ENCODE measurements at regions of chr4 and their contacts with region 1.

Region 1: DNA sequence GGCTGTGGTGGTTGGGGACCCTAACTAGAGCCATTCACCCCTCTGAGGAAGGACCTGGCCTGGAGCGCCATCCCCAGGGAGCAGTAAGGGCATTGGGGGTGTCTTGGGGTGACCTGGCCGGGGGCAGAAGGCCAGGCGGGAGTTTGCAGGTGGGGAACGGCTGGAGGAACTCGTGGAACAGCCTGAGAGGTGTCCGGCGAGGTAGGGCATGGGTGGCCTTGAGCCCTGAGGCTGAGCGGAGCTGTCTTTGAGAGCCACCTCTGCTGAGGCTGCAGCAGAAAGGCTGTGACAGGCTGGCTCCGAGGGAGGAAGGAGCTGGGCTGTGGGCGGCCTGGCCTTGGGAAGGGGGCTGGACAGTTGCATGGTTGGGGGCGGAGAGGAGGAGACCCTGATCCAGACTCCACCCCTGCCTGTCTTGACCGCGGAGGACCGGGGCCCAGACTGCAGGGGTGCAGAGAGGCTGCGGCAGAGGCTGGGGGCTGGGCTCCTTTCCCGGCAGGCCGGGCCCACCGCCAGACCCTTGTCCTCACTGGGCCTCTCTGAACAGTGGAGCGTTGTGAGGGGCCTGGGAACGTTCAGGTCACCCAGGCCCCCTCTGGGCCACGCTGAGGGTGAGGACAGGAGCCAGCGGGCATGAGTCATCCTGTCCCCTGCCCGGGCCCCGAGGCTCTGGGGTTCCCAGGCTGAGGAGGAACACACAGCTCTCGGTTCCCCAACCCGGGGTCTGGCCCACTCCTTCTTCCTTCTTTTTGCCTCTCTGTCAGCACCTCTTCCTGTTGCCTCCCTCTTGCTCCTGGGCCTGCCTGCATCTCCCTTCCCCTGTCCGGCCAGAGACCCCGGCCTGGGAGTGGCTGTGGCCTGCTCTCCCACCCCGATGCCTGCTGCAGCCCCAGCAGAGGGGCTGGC is 8.1 kb downstream of the SH3BP2 start:
- DNase-seq: peak in 3 of 9 experiments; percentile 14 to 45 (median 21)
- ATAC-seq: no peak
- H3K4me3 ChIP-seq: no peak overlapping the region
- H3K4me3 Mint-ChIP-seq: peak overlapping the region; percentile 22
- H3K27ac ChIP-seq: no peak overlapping the region
- H3K27ac Mint-ChIP-seq: no peak overlapping the region
- H3K4me1 ChIP-seq: peaks cover 47% of the 10 kb centered on the region
- H3K4me1 Mint-ChIP-seq: peaks cover 33% of the 10 kb centered on the region
- H3K27me3 ChIP-seq: no peaks in the 10 kb centered on the region
- H3K27me3 Mint-ChIP-seq: no peaks in the 10 kb centered on the region
- CTCF ChIP-seq: no peak

Region 2: GRCh38 chr4:2837904-2838496 is 37.1 kb after region 1 on chr4:
- CTCF ChIA-PET with region 1: no interaction called
- POLR2A ChIA-PET with region 1: interaction called, 17 read pairs
- intact Hi-C with region 1: loop called in 1 of 2 experiments (anchors 5 kb)
- DNase-seq: peak; percentile 43 to 91 (median 80)
- ATAC-seq: peak; percentile 96
- H3K4me3 ChIP-seq: peak overlapping the region; percentile 41 to 42
- H3K4me3 Mint-ChIP-seq: peak overlapping the region; percentile 81
- H3K27ac ChIP-seq: peak overlapping the region; percentile 40 to 74
- H3K27ac Mint-ChIP-seq: peak overlapping the region; percentile 94
- H3K4me1 ChIP-seq: peaks cover 60% of the 10 kb centered on the region
- H3K4me1 Mint-ChIP-seq: peaks cover 68% of the 10 kb centered on the region
- H3K27me3 ChIP-seq: no peaks in the 10 kb centered on the region
- H3K27me3 Mint-ChIP-seq: no peaks in the 10 kb centered on the region
- CTCF ChIP-seq: no peak

Region 3: GRCh38 chr4:2867758-2868491 is 67.0 kb after region 1 on chr4:
- CTCF ChIA-PET with region 1: no interaction called
- POLR2A ChIA-PET with region 1: no interaction called
- intact Hi-C with region 1: no loop called
- DNase-seq: no peak
- ATAC-seq: no peak
- H3K4me3 ChIP-seq: no peak overlapping the region
- H3K4me3 Mint-ChIP-seq: no peak overlapping the region
- H3K27ac ChIP-seq: no peak overlapping the region
- H3K27ac Mint-ChIP-seq: peak overlapping the region; percentile 22
- H3K4me1 ChIP-seq: peaks cover 28% of the 10 kb centered on the region
- H3K4me1 Mint-ChIP-seq: peaks cover 84% of the 10 kb centered on the region
- H3K27me3 ChIP-seq: no peaks in the 10 kb centered on the region
- H3K27me3 Mint-ChIP-seq: no peaks in the 10 kb centered on the region
- CTCF ChIP-seq: no peak

Measured in CD8-positive, alpha-beta T cell (primary cell).